ENCODE measurements at regions of chr7 and their contacts with region 1.

Region 1: GRCh38 chr7:12322284-12322902 is 81.3 kb downstream of the VWDE start:
- DNase-seq: peak; percentile 3
- CTCF ChIP-seq: peak; percentile 55

Region 2: DNA sequence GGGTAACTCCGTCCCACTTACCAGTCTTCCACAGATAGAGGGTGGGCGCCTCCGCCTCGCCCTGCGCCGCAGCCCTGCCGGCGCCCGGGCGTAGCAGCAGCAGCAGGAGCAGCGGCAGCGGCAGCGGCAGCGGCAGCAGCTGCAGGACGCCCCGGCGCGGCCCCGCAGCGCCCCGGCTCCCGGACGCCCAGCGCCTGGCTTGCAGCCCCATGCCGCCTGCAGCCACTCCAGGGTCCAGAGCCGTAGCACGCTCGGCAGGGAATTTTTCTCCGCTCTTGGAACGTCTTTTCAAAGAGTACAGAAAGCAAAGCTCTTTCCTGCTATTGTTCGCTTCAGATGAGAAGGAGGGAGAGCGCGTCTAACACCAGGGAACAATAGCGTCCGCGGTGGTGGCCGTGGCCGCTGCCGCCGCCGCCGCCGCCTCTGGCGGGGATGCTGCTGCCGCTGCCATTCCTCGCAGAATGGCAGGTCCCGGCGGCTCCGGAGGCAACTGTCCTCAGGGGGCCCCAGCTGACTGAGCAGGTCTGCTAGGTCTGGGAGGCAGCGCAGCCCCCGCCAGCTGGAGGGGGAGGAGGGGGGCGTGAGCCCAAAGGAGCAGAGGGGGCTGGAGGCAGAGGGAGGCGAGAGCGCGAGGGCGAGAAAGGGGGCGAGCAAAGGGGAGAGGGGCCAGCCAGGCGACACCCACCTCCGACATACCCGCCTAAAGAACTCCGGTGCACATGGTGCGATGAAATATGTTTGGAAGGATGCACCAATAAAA is 490.5 kb before region 1 on chr7 and contains the start of gene THSD7A:
- in situ Hi-C with region 1: loop called (anchors 25 kb)
- DNase-seq: peak; percentile 28
- CTCF ChIP-seq: no peak

Region 3: GRCh38 chr7:12067141-12067831 is 255.1 kb before region 1 on chr7:
- in situ Hi-C with region 1: loop called (anchors 25 kb)
- DNase-seq: peak; percentile 18
- CTCF ChIP-seq: peak; percentile 71

Region 4: DNA sequence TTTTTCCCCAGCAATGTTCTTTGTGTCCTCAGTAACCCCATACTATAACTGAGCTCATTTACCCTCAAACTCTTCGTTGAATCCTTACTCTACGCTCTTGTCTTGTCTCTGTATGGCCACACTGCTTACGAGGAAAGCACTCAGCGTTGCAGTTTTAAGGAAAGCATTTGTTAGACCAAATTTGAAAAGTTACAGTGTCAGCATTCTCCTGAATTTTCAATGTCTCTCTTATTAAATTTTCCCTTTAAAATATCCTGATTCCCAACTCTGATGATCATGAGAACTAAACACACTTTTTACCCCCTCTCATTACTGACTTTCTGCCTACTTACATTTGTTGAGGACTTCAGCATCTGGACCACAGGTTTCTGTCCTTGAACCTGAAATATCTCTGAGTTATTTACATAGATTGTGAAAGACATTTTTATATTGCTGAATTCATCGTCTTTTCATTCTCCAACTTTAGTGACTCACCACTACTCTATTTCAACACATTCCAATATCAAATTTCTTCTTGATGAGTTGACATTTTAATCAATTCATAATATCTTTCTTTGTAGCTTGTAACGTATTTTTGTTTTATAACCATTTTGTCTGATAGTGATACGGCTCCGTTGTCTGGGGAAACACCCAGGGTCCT is 101.1 kb after region 1 on chr7:
- in situ Hi-C with region 1: no loop called
- DNase-seq: no peak
- CTCF ChIP-seq: no peak

Region 5: GRCh38 chr7:12601302-12601869 is 279.0 kb after region 1 on chr7:
- in situ Hi-C with region 1: no loop called
- DNase-seq: no peak
- CTCF ChIP-seq: no peak

Region 6: GRCh38 chr7:12827920-12828319 is 505.5 kb after region 1 on chr7:
- in situ Hi-C with region 1: no loop called
- DNase-seq: no peak
- CTCF ChIP-seq: no peak

Measured in GM13977 (cell line).